HepG2 (cell line): ENCODE measurements at regions of chr18 and their contacts with region 1.

Region 1: GRCh38 chr18:22813648-22814328 is 119.3 kb upstream of the RBBP8 start:
- DNase-seq: peak; percentile 21
- ATAC-seq: peak; percentile 55
- H3K4me3 ChIP-seq: no peak overlapping the region
- H3K27ac ChIP-seq: no peak overlapping the region
- H3K4me1 ChIP-seq: peaks cover 10% of the 10 kb centered on the region
- H3K27me3 ChIP-seq: no peaks in the 10 kb centered on the region
- CTCF ChIP-seq: peak; percentile 76
- EP300 ChIP-seq: no peak
- POLR2A ChIP-seq: no peak
- RAD21 ChIP-seq: peak; percentile 39; the same call in 1 of the 2 replicates

Region 2: DNA sequence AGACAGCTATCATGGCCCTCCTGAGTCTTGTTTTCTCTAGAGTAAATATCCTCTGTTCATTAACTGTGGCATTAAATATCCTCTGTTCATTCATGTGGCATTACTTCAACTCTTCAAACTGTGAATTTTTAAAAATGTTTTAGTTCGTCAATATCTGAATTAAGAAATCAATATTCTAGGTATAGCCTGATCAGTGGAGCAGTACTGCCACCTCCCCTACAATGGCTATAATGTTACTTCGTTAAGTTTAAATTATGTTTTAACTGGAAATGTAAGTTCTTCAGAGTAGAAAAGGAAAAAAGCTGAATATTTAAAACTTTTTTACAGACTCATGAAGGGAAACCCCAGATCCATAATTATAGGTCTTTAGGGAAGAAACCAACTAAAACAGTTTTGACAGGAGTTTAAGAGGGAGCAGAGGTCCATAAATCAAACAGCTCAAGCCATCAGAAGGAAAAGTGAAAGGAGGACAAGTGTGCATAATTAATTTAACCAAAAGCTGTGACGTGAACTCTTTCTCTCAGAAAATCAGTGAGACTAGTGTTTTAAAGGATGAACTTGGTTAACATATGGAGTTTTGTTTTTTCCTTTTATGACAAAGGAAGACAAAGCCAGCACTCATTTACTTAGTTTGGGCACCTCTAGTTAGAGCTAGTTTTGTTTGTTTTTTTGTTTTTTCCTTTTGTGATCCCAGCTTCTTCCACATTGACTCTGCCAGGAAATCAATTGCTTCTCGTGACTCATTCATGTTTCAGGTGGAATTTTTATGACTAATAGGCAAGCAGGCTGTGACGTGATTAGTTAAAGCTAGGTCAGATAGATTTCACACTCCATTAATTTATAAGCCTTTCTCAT is 164.3 kb after region 1 on chr18:
- CTCF ChIA-PET with region 1: interaction called, 11 read pairs
- POLR2A ChIA-PET with region 1: no interaction called
- in situ Hi-C with region 1: loop called (anchors 10 kb)
- intact Hi-C with region 1: loop called (anchors 1 kb)
- DNase-seq: no peak
- ATAC-seq: no peak
- H3K4me3 ChIP-seq: no peak overlapping the region
- H3K27ac ChIP-seq: no peak overlapping the region
- H3K4me1 ChIP-seq: no peaks in the 10 kb centered on the region
- H3K27me3 ChIP-seq: no peaks in the 10 kb centered on the region
- CTCF ChIP-seq: no peak
- EP300 ChIP-seq: no peak
- POLR2A ChIP-seq: no peak
- RAD21 ChIP-seq: no peak

Region 3: DNA sequence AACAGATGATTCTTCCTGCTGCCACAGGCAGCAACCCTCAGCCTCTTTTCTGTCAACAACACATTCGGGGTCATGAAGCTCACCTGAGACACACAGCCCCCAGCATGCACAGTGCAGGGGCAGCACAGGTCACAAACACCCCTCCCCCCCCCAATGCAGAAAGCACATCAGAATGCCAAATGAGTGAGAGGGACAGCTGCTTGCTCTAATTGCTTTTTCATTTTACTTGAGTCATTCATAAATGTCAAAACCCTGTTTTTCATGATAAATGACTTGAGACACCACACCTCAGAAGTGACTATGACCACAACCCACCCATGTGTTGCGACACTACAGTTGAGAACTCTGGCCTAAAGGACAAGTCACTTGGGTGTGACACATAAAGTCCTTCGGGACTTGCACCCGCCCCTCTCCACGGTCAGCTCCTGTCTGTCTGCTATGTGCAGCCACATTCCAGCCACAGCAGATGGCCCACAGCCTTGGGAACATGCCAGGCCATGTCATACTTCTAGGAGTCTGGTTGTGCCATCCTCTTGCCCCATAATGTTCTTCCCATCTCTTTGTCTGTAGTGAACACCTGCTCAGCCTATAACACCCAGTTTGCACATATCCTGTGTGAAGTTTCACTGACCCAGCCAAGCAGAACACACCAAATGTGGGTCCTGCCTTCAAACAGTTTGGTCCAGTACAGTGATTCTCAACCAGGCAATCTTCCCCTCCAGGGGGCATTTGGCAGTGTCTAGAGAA is 609.1 kb after region 1 on chr18:
- CTCF ChIA-PET with region 1: no interaction called
- POLR2A ChIA-PET with region 1: no interaction called
- in situ Hi-C with region 1: loop called (anchors 25 kb)
- intact Hi-C with region 1: no loop called
- DNase-seq: peak; percentile 66
- ATAC-seq: peak; percentile 67
- H3K4me3 ChIP-seq: no peak overlapping the region
- H3K27ac ChIP-seq: no peak overlapping the region
- H3K4me1 ChIP-seq: peaks cover 29% of the 10 kb centered on the region
- H3K27me3 ChIP-seq: no peaks in the 10 kb centered on the region
- CTCF ChIP-seq: no peak
- EP300 ChIP-seq: no peak
- POLR2A ChIP-seq: no peak
- RAD21 ChIP-seq: no peak